Left ventricle myocardium inferior (tissue), 1 donor: ENCODE measurements at regions of chr13 and their contacts with region 1.

Region 1: DNA sequence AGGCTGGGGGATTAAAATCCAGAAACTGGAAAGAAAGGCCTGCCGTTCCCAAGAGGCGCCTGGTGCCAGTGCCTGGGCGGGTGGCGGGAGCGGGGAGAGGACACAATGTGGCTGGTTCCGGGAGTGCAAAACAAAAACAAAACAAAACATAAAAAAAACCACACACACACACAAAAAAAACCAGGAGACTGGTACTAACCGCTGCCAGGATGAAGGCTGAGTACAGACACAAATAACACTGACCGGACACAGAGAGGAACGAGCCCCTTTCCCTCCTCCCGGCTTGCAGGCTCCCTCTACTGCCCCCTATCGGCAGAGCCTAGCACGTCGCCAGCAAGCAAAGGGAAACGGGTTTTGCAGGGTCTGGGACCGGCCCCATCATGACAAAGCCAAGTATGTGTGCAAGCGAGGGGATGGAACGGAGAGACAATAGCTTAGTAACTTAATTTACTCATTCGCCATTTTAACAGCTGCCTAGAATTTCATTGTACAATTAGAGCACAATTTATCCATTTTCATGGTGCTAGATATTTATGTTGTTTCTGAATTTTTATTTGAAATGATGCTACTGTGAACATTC is 17.9 kb upstream of the ZDHHC20 start:
- DNase-seq: peak; percentile 77
- H3K4me3 ChIP-seq: peak overlapping the region; percentile 64
- H3K27ac ChIP-seq: peak overlapping the region; percentile 59
- H3K4me1 ChIP-seq: peaks cover 28% of the 10 kb centered on the region
- H3K27me3 ChIP-seq: no peaks in the 10 kb centered on the region
- CTCF ChIP-seq: peak; percentile 99

Region 2: DNA sequence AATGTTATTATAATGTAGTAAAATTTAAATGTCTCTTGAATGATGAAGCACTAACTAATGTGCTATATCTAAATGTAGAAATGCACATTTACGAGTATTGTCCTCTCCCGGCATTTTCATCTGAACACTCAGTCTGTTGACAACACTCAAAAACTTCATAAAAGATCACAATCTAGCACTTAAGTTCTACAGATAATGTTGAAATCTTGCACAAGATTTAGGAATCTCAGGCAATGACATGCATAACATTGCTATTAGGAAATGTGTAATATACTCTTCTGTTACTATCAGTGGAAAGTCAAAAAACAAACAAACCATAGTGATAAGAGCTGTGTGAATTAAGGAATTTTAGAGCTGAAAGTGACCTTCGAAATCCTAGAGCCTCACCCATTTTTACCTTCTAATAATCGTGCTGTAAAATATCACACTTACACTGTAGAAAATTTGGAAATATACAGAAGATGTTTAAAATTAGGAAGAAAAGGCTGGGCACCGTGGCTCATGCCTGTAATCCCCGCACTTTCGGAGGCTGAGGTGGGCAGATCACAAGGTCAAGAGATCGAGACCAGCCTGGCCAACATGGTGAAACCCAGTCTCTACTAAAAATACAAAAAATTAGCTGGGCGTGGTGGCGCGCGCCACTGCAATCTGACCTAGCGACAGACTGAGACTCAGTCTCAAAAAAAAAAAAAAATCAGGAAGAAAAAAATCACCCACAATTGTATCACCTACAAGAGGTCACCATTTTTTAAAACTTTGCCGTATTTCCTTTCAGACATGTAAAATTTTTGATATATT is 536.7 kb before region 1 on chr13:
- intact Hi-C with region 1: loop called (anchors 5 kb)
- DNase-seq: no peak
- H3K4me3 ChIP-seq: no peak overlapping the region
- H3K27ac ChIP-seq: peak overlapping the region; percentile 67
- H3K4me1 ChIP-seq: peaks cover 9% of the 10 kb centered on the region
- H3K27me3 ChIP-seq: no peaks in the 10 kb centered on the region
- CTCF ChIP-seq: no peak

Region 3: DNA sequence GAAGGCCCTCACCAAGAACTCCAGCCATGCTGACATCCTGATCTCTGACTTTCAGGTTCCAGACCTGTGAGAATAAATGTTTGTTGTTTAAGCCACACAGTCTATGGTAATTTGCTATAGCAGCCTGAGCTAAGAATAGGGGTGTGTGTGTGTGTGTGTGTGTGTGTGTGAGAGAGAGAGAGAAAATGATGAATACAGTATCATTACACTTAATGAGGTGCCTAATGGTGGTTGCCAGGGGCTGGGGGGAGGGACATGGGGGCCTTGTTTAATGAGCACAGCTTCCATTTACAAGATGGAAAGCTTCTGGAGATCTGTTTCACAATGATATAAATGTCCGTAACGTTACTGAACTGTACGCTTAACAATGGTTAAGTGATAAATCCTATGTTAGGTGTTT is 361.8 kb before region 1 on chr13:
- intact Hi-C with region 1: loop called (anchors 10 kb)
- DNase-seq: no peak
- H3K4me3 ChIP-seq: no peak overlapping the region
- H3K27ac ChIP-seq: no peak overlapping the region
- H3K4me1 ChIP-seq: no peaks in the 10 kb centered on the region
- H3K27me3 ChIP-seq: no peaks in the 10 kb centered on the region
- CTCF ChIP-seq: no peak

Region 4: GRCh38 chr13:21297914-21298831 is 178.8 kb before region 1 on chr13:
- intact Hi-C with region 1: loop called (anchors 5 kb)
- DNase-seq: peak; percentile 79
- H3K4me3 ChIP-seq: peak overlapping the region; percentile 98
- H3K27ac ChIP-seq: peak overlapping the region; percentile 70
- H3K4me1 ChIP-seq: peaks cover 21% of the 10 kb centered on the region
- H3K27me3 ChIP-seq: no peaks in the 10 kb centered on the region
- CTCF ChIP-seq: peak; percentile 95